MCF 10A (cell line): ENCODE measurements at regions of chr11 and their contacts with region 1.

Region 1: DNA sequence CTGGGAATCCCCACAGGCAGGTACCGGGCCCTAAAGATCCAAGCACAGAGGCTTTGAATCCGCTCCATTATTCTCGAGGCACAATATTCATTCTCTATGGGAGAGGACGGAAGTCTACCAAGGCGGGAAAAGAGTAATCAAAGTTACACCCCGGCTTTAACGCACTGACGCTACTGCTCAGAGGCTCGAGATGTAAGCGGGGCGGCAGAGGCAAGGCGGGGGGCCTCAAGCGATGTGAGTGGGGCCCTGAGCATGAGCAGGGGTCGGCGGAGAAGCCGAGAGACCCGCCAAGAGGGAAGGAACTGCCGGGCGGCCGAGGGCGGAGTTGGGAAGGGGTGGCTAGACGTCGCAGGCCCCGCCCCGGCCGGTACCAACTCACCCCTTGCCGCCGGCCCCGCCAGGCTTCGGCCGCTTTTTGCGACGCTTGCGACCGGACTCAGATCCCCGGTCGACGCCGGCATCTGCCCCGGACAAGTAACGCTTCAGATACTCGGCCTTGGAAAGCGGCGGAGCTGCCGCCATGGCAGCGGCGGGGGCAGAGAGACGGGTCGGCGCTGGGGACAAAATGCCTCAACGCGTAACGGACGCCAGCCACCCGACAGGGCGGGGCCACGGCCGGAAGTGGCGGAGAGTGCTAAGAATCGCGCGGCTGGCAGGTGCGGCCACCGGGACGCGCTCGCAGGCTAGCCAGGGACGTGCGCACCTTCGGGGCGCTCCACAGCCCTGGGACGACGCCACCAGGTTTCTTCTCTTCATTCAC is at the start of gene BUD13:
- DNase-seq: peak; percentile 86
- H3K4me3 Mint-ChIP-seq: peak within 1 kb of the TSS; percentile 97
- H3K27ac Mint-ChIP-seq: peak within 1 kb of the TSS; percentile 98
- H3K4me1 Mint-ChIP-seq: peaks cover 25% of the 10 kb centered on the region
- H3K27me3 Mint-ChIP-seq: no peaks in the 10 kb centered on the region
- CTCF ChIP-seq: no peak
- total RNA-seq, gene BUD13: 11.8 and 15.1 TPM in 2 replicates

Region 2: GRCh38 chr11:116782728-116783127 is 10.1 kb after region 1 on chr11:
- CTCF ChIA-PET with region 1: no interaction called
- POLR2A ChIA-PET with region 1: interaction called, 59 read pairs
- intact Hi-C with region 1: no loop called
- DNase-seq: peak; percentile 84
- H3K4me3 Mint-ChIP-seq: no peak overlapping the region
- H3K27ac Mint-ChIP-seq: peak overlapping the region; percentile 85
- H3K4me1 Mint-ChIP-seq: peaks cover 26% of the 10 kb centered on the region
- H3K27me3 Mint-ChIP-seq: no peaks in the 10 kb centered on the region
- CTCF ChIP-seq: no peak

Region 3: DNA sequence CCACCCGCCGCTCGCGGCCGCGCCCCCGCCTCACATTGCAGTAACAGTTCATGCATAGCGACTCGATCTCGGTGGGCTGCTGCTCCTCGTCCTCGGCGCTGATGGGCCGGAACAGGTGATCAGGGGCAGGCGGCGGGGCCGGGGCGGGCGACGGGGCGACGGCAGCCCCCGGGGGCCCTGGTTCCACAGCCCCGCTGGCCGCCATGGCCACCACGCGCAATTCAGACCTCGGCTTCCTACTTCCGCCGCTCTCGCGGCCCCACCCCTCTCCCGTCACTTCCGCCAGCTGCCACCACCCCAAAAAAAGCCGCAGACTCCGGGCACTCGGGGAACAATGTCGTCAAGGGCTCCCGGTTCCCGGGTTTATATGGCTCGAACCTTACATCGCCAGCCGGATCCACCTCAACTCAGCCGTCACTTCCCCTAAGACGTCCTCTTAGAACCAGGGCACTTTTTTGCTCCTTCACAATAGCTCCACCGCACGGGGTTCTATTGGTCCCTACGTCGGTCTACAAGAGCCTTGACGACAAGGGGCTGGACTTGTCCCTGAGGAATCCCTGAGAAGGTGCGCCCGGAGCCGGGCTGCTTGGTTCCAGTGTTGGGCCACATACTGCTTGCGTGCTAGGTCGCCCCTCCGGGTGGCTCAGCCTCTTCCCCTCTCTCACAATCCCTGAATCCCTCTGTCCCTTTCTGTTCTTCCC is 15.3 kb after region 1 on chr11 and contains the start of gene ZPR1:
- CTCF ChIA-PET with region 1: interaction called, 5 read pairs
- POLR2A ChIA-PET with region 1: interaction called, 59 read pairs
- intact Hi-C with region 1: no loop called
- DNase-seq: peak; percentile 58
- H3K4me3 Mint-ChIP-seq: peak within 1 kb of the TSS; percentile 92
- H3K27ac Mint-ChIP-seq: peak within 1 kb of the TSS; percentile 99
- H3K4me1 Mint-ChIP-seq: peaks cover 28% of the 10 kb centered on the region
- H3K27me3 Mint-ChIP-seq: no peaks in the 10 kb centered on the region
- CTCF ChIP-seq: no peak
- total RNA-seq, gene ZPR1: 82.5 and 105 TPM in 2 replicates